ENCODE measurements at regions of chr14 and their contacts with region 1.

Region 1: DNA sequence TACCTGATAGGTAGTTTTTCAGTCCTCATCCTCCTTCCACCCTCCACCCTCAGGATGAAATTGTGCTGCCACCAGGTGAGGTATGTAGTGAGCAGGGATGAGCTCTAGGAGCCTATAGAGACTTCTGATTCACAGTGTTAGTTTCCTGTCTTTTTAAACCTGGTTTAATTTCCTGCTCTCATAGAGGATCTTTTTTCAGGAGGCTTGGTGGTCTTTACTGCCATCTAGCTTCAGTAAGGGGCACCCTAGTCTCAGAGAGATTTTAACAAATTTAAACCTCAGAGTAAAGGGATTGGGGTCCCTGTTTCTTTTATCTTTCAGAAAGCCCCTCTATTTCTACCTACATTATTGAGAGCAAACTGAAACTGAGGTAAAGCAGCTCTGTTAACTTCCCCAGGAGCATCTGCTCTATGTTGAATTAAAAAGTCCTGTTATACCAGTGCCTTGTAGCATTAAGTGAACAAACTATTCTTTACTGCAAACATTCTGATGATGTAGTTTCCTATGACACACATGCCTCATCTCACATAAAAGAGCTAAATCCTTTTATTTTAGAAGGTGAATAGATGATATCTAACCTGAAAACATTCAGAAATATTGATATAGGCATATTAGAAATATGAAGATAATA is 172.2 kb upstream of the DDHD1 start:
- DNase-seq: no peak
- ATAC-seq: no peak
- H3K4me3 ChIP-seq: no peak overlapping the region
- H3K27ac ChIP-seq: no peak overlapping the region
- H3K4me1 ChIP-seq: no peaks in the 10 kb centered on the region
- H3K27me3 ChIP-seq: no peaks in the 10 kb centered on the region
- CTCF ChIP-seq: peak; percentile 15; the same call in 1 of the 2 replicates

Region 2: GRCh38 chr14:53310412-53310811 is 14.9 kb before region 1 on chr14:
- CTCF ChIA-PET with region 1: no interaction called
- POLR2A ChIA-PET with region 1: no interaction called
- in situ Hi-C with region 1: no loop called
- intact Hi-C with region 1: no loop called
- DNase-seq: no peak
- ATAC-seq: no peak
- H3K4me3 ChIP-seq: no peak overlapping the region
- H3K27ac ChIP-seq: no peak overlapping the region
- H3K4me1 ChIP-seq: no peaks in the 10 kb centered on the region
- H3K27me3 ChIP-seq: no peaks in the 10 kb centered on the region
- CTCF ChIP-seq: no peak

Region 3: DNA sequence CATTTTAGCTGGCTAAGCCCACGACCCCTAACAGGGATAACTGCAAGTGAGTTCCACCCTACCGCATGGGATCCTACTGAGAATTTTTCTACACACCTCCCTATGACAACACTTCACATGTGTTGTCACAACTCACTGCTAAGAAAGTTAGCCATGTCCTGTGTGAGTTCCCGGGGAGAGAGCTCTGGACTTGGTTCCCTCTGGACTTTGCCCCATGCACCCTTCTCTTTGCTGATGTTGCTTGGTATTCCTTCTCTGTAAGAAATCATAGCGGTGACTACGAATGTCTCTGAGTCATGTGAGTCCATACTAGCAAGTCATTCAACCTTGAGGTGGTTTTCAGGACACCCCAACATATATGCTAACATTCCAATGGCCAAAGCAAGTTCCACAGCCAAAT is 1062.0 kb after region 1 on chr14:
- CTCF ChIA-PET with region 1: no interaction called
- POLR2A ChIA-PET with region 1: interaction called, 11 read pairs
- in situ Hi-C with region 1: no loop called
- intact Hi-C with region 1: no loop called
- DNase-seq: no peak
- ATAC-seq: no peak
- H3K4me3 ChIP-seq: no peak overlapping the region
- H3K27ac ChIP-seq: no peak overlapping the region
- H3K4me1 ChIP-seq: no peaks in the 10 kb centered on the region
- H3K27me3 ChIP-seq: no peaks in the 10 kb centered on the region; the same call in none of the 2 replicates
- CTCF ChIP-seq: no peak